CD8-positive, alpha-beta memory T cell (primary cell): ENCODE measurements at regions of chr11 and their contacts with region 1.

Region 1: DNA sequence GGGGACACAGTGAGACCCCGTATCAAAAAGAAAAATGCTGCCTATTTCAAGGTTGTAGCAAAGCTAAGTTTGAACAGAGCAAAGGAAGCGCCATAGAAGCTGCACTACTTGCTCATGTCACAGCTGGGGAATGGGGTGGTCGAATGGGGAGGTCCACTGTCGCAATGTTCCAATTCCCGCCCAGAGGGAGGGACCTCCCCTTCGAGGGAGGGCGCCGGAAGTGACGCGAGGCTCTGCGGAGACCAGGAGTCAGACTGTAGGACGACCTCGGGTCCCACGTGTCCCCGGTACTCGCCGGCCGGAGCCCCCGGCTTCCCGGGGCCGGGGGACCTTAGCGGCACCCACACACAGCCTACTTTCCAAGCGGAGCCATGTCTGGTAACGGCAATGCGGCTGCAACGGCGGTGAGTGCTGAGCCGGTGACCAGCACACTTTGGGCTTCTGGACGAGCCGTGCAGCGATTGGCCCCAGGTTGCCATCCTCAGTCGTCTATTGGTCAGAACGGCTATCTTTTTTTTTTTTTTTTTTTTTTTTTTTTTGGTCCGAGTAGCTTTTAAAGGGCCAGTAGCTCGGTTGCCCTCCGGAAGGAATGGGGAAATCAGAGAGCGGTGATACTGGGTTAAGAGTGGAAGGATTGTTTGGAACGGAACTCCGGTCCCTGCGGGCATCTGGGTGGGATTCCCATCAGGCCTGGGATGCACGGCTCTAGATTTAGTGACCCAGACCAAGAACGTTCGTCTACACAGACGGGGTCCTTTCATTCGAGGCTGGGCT is at the start of gene HMBS:
- DNase-seq: peak; percentile 88 to 94 (median 90)
- H3K4me3 ChIP-seq: peak within 1 kb of the TSS; percentile 98
- H3K4me3 Mint-ChIP-seq: peak within 1 kb of the TSS; percentile 93 to 98 (median 95)
- H3K27ac ChIP-seq: peak within 1 kb of the TSS; percentile 89
- H3K27ac Mint-ChIP-seq: peak within 1 kb of the TSS; percentile 89 to 98 (median 96)
- H3K4me1 ChIP-seq: peaks cover 15% of the 10 kb centered on the region
- H3K4me1 Mint-ChIP-seq: peaks cover 17 to 25% (median 21%) of the 10 kb centered on the region in 3 donors
- H3K27me3 ChIP-seq: no peaks in the 10 kb centered on the region
- H3K27me3 Mint-ChIP-seq: no peaks in the 10 kb centered on the region
- total RNA-seq, gene HMBS: 35.5 to 38.4 TPM

Region 2: DNA sequence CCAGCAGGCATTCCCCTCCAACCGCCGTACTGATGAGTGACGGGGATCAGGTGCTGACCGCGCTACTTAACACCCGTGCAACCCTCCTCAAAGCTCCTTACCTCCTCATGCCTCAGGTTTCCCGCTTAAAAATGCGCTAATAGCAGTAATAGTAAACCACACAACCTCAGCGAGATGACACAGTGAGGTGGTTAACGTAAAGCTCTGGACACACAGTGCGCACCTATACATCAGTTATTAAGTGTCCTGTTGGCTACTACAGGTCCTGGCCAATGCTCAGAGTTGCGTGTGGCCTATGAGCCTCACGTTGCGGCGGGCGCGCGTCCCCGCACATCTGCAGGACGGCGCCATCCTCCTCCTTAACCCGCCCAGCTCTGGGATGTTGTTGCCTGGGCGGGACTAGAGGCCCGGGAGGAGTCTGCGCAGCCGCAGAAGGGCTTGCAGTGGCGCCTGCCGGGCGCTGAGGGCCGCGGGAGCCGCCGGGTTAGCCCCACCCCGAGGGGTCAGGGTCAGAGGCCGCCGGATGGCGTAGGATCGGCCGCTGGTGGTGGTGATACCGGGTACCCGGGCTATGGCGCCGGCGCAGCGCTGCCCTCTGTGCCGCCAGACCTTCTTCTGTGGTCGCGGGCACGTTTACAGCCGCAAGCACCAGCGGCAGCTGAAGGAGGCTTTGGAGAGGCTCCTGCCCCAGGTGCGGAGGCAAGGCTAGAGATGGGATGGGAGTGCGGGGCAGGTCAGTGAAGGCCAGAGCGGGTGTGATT is 87.0 kb before region 1 on chr11 and contains the start of gene CENATAC:
- CTCF ChIA-PET with region 1: no interaction called
- POLR2A ChIA-PET with region 1: interaction called, 18 read pairs
- DNase-seq: peak; percentile 94 to 98 (median 94)
- H3K4me3 ChIP-seq: peak within 1 kb of the TSS; percentile 94
- H3K4me3 Mint-ChIP-seq: peak within 1 kb of the TSS; percentile 90 to 99 (median 94)
- H3K27ac ChIP-seq: peak within 1 kb of the TSS; percentile 84
- H3K27ac Mint-ChIP-seq: peak within 1 kb of the TSS; percentile 79 to 100 (median 97)
- H3K4me1 ChIP-seq: peaks cover 20% of the 10 kb centered on the region
- H3K4me1 Mint-ChIP-seq: peaks cover 33 to 46% (median 34%) of the 10 kb centered on the region in 3 donors
- H3K27me3 ChIP-seq: no peaks in the 10 kb centered on the region
- H3K27me3 Mint-ChIP-seq: peaks cover 0 to 3% of the 10 kb centered on the region in 2 donors
- total RNA-seq, gene CENATAC: 29.1 to 34.6 TPM

Region 3: GRCh38 chr11:119057000-119057769 is 27.7 kb before region 1 on chr11 and contains the start of gene HYOU1:
- CTCF ChIA-PET with region 1: interaction called, 8 read pairs
- POLR2A ChIA-PET with region 1: interaction called, 13 read pairs
- DNase-seq: peak; percentile 98 to 99 (median 98)
- H3K4me3 ChIP-seq: peak within 1 kb of the TSS; percentile 84
- H3K4me3 Mint-ChIP-seq: peak within 1 kb of the TSS; percentile 91 to 99 (median 95)
- H3K27ac ChIP-seq: peak within 1 kb of the TSS; percentile 82
- H3K27ac Mint-ChIP-seq: peak within 1 kb of the TSS; percentile 85 to 99 (median 98)
- H3K4me1 ChIP-seq: peaks cover 22% of the 10 kb centered on the region
- H3K4me1 Mint-ChIP-seq: peaks cover 35 to 43% (median 43%) of the 10 kb centered on the region in 3 donors
- H3K27me3 ChIP-seq: no peaks in the 10 kb centered on the region
- H3K27me3 Mint-ChIP-seq: no peaks in the 10 kb centered on the region
- total RNA-seq, gene HYOU1: 181 TPM

Region 4: GRCh38 chr11:119095066-119095880 is 10.4 kb after region 1 on chr11:
- CTCF ChIA-PET with region 1: interaction called, 13 read pairs
- POLR2A ChIA-PET with region 1: interaction called, 39 read pairs
- DNase-seq: peak; percentile 99 to 100 (median 100)
- H3K4me3 ChIP-seq: peak overlapping the region; percentile 88
- H3K4me3 Mint-ChIP-seq: peak overlapping the region; percentile 84 to 97 (median 93)
- H3K27ac ChIP-seq: peak overlapping the region; percentile 84
- H3K27ac Mint-ChIP-seq: peak overlapping the region; percentile 55 to 96 (median 88)
- H3K4me1 ChIP-seq: peaks cover 26% of the 10 kb centered on the region
- H3K4me1 Mint-ChIP-seq: peaks cover 35 to 50% (median 50%) of the 10 kb centered on the region in 3 donors
- H3K27me3 ChIP-seq: no peaks in the 10 kb centered on the region
- H3K27me3 Mint-ChIP-seq: peaks cover 0 to 4% of the 10 kb centered on the region in 2 donors

Region 5: DNA sequence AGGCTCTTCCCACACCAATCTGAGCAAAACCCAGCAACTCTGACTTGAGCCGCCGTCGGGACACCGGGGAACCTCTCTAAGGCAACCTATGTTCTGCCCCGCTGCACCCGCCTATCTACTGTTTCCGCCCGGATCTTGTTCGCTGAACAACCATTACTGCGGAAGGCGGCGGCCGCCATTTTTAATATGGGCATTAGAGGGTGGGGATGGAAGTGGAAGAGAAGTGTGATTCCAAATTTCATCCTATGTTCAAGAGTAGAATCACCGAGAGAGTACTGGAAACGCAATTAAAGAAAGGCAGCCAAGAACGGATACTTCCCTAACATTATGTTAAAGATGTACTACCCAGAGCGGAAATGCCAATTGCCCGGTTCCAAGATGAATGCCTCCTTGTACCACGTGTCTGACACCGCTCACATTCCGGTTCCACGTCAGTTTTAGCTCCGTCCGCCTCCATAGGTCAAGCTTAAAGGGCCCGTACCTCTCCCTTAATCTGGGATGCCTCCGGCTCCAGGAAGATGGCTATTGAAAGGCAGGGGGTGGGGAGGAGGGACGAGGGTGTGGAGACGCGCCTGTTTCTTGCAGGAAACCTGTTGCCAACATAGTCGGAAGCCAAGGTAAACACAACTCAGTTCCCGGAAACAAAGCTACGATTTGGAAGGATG is 17.0 kb after region 1 on chr11 and contains the start of gene DPAGT1:
- CTCF ChIA-PET with region 1: interaction called, 10 read pairs
- POLR2A ChIA-PET with region 1: interaction called, 7 read pairs
- DNase-seq: peak; percentile 73 to 88 (median 82)
- H3K4me3 ChIP-seq: peak within 1 kb of the TSS; percentile 97
- H3K4me3 Mint-ChIP-seq: peak within 1 kb of the TSS; percentile 88 to 99 (median 98)
- H3K27ac ChIP-seq: peak within 1 kb of the TSS; percentile 95
- H3K27ac Mint-ChIP-seq: peak within 1 kb of the TSS; percentile 93 to 100 (median 98)
- H3K4me1 ChIP-seq: peaks cover 38% of the 10 kb centered on the region
- H3K4me1 Mint-ChIP-seq: peaks cover 41 to 66% (median 61%) of the 10 kb centered on the region in 3 donors
- H3K27me3 ChIP-seq: no peaks in the 10 kb centered on the region
- H3K27me3 Mint-ChIP-seq: no peaks in the 10 kb centered on the region
- total RNA-seq, gene DPAGT1: 69.7 to 78.6 TPM